ENCODE measurements at regions of chr10 and their contacts with region 1.

Region 1: DNA sequence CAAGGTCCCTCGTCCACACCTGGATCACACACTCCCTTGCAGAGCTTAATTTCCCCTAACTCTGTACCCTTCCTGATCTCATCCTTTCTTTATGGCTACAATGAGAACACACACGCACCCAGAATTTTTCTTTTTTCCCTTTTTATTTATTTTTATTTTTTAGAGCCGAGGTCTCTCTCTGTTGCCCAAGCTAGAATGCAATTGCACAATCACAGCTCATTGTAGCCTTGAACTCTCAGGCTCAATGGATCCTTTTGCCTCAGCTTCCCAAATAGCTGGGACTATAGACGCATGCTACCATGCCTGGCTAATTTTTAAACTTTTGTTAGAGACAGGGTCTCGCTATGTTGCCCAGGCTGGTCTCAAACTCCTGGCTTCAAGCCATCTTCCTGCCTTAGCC is 171.3 kb downstream of the GATA3 start:
- DNase-seq: no peak
- ATAC-seq: no peak
- H3K4me3 ChIP-seq: no peak overlapping the region
- H3K27ac ChIP-seq: no peak overlapping the region
- H3K4me1 ChIP-seq: no peaks in the 10 kb centered on the region
- H3K27me3 ChIP-seq: no peaks in the 10 kb centered on the region
- CTCF ChIP-seq: no peak
- EP300 ChIP-seq: no peak
- POLR2A ChIP-seq: no peak
- RAD21 ChIP-seq: no peak

Region 2: GRCh38 chr10:7901256-7901655 is 324.6 kb before region 1 on chr10:
- CTCF ChIA-PET with region 1: no interaction called
- POLR2A ChIA-PET with region 1: no interaction called
- RAD21 ChIA-PET with region 1: no interaction called
- SMC1A ChIA-PET with region 1: no interaction called
- in situ Hi-C with region 1: no loop called
- intact Hi-C with region 1: no loop called
- DNase-seq: no peak
- ATAC-seq: no peak
- H3K4me3 ChIP-seq: no peak overlapping the region
- H3K27ac ChIP-seq: no peak overlapping the region
- H3K4me1 ChIP-seq: no peaks in the 10 kb centered on the region
- H3K27me3 ChIP-seq: no peaks in the 10 kb centered on the region
- CTCF ChIP-seq: no peak
- EP300 ChIP-seq: no peak
- POLR2A ChIP-seq: no peak
- RAD21 ChIP-seq: no peak

Region 3: GRCh38 chr10:8150401-8150905 is 75.4 kb before region 1 on chr10:
- CTCF ChIA-PET with region 1: no interaction called
- POLR2A ChIA-PET with region 1: no interaction called
- RAD21 ChIA-PET with region 1: no interaction called
- SMC1A ChIA-PET with region 1: no interaction called
- in situ Hi-C with region 1: no loop called
- intact Hi-C with region 1: loop called (anchors 2 kb)
- DNase-seq: no peak
- ATAC-seq: no peak
- H3K4me3 ChIP-seq: no peak overlapping the region
- H3K27ac ChIP-seq: no peak overlapping the region
- H3K4me1 ChIP-seq: no peaks in the 10 kb centered on the region
- H3K27me3 ChIP-seq: no peaks in the 10 kb centered on the region
- CTCF ChIP-seq: no peak
- EP300 ChIP-seq: no peak
- POLR2A ChIP-seq: no peak
- RAD21 ChIP-seq: no peak

Region 4: GRCh38 chr10:8238986-8239385 is 13.2 kb after region 1 on chr10:
- CTCF ChIA-PET with region 1: no interaction called
- POLR2A ChIA-PET with region 1: no interaction called
- RAD21 ChIA-PET with region 1: no interaction called
- SMC1A ChIA-PET with region 1: no interaction called
- in situ Hi-C with region 1: no loop called
- intact Hi-C with region 1: no loop called
- DNase-seq: no peak
- ATAC-seq: no peak
- H3K4me3 ChIP-seq: no peak overlapping the region
- H3K27ac ChIP-seq: no peak overlapping the region
- H3K4me1 ChIP-seq: no peaks in the 10 kb centered on the region
- H3K27me3 ChIP-seq: no peaks in the 10 kb centered on the region; a peak in 1 of 4 replicates
- CTCF ChIP-seq: no peak
- EP300 ChIP-seq: no peak
- POLR2A ChIP-seq: no peak
- RAD21 ChIP-seq: no peak

Region 5: DNA sequence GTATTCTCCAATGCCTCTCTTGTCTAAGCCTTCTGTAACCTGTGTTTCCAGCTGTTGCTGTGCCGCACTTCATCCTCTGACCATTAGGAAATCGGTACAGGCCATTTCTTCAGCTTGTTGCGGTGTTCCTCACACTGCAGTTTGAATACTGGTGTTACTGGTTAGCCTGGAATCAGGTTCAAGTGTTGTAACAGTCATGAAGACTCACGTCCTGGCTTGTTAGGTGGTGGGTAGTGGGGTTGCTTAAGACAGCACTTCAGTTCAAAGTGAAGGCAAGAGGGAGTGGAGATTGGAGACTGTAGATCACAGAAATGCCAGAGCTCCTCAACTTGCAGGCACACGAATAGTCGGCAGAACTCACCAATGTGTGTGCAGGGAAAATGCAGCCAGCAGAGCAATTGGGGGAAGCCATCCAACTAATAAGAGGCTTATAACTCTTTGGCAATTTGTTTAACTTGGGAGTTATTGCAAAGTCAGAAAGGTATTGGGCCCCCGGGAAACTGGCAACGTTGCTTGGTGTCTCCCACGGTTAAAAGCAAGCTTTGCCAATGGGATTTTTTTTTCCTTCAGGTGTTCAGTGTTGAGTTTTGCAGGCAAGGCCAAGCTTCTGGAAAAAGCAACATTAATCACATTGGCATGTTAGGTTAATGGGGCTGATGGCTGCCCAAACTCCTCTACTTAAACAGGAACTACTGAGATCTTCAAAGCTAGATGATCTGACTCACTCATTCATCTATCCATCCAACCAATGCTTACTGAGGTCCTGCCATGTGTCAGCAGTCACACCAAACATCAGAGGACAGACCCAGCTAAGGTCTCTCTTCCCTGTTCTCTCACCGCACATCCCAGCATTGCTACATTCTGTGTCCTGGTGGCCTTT is 209.6 kb after region 1 on chr10:
- CTCF ChIA-PET with region 1: no interaction called
- POLR2A ChIA-PET with region 1: no interaction called
- RAD21 ChIA-PET with region 1: no interaction called
- SMC1A ChIA-PET with region 1: no interaction called
- in situ Hi-C with region 1: no loop called
- intact Hi-C with region 1: no loop called
- DNase-seq: no peak
- ATAC-seq: no peak
- H3K4me3 ChIP-seq: no peak overlapping the region
- H3K27ac ChIP-seq: no peak overlapping the region
- H3K4me1 ChIP-seq: no peaks in the 10 kb centered on the region
- H3K27me3 ChIP-seq: no peaks in the 10 kb centered on the region; a peak in 1 of 4 replicates
- CTCF ChIP-seq: no peak
- EP300 ChIP-seq: no peak
- POLR2A ChIP-seq: no peak
- RAD21 ChIP-seq: no peak